ENCODE measurements at regions of chr7 and their contacts with region 1.

Region 1: GRCh38 chr7:140653319-140654108 is 12.9 kb upstream of the DENND2A start:
- DNase-seq: peak; percentile 58 to 64
- H3K4me3 ChIP-seq: no peak overlapping the region
- H3K27ac ChIP-seq: no peak overlapping the region
- H3K4me1 ChIP-seq: peaks cover 0 to 21% (median 7%) of the 10 kb centered on the region in 4 donors
- H3K27me3 ChIP-seq: peaks cover 0 to 10% of the 10 kb centered on the region in 2 donors
- CTCF ChIP-seq: peak; percentile 78 to 85

Region 2: GRCh38 chr7:140517546-140518369 is 135.8 kb before region 1 on chr7:
- intact Hi-C with region 1: loop called (anchors 5 kb)
- DNase-seq: peak; percentile 88 to 91
- H3K4me3 ChIP-seq: no peak overlapping the region
- H3K27ac ChIP-seq: no peak overlapping the region
- H3K4me1 ChIP-seq: peaks cover 0 to 3% (median 0%) of the 10 kb centered on the region in 4 donors
- H3K27me3 ChIP-seq: peaks cover 0 to 2% of the 10 kb centered on the region in 2 donors
- CTCF ChIP-seq: peak; percentile 78 to 86

Region 3: GRCh38 chr7:140609646-140610045 is 43.9 kb before region 1 on chr7:
- intact Hi-C with region 1: no loop called
- DNase-seq: no peak
- H3K4me3 ChIP-seq: no peak overlapping the region
- H3K27ac ChIP-seq: no peak overlapping the region
- H3K4me1 ChIP-seq: peaks cover 0 to 8% (median 0%) of the 10 kb centered on the region in 4 donors
- H3K27me3 ChIP-seq: peaks cover 0 to 3% of the 10 kb centered on the region in 2 donors
- CTCF ChIP-seq: no peak

Region 4: DNA sequence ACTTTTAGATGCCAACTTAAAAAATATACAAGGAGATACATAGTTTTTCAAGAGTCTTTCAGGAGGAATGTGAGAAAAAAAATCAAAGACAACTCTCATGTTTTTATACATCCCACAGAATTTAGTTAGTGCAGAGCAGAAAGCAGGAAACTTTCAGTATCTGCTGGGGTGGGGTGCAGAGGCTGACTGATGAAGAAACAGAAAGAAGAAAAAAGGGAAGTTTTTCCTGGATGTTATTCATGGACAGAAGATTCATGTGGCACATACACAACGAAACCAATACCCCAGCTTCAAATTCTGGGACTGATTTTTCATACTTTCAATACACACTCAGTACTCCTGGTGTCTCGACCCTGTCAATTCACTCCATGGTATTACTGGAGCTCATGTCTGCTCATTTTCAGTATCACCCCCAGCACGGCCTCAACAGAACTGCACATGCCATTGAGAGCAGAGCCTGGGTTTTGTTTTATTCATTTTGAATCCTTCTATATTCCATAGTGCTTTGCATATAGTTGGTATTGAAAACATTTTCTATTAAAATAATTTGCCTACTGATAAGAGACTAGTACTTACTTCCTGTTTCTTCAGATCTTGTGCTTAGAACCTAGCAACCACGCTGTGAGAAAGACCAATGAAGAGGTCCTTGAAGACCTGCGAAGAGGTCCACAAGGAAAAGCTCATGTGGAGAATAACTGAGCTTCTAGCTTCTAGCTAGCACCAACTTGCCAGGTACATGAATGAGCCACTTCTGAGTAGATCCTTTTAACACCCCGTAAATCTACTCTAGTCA is 91.9 kb after region 1 on chr7:
- intact Hi-C with region 1: no loop called
- DNase-seq: no peak
- H3K4me3 ChIP-seq: no peak overlapping the region
- H3K27ac ChIP-seq: no peak overlapping the region
- H3K4me1 ChIP-seq: no peaks in the 10 kb centered on the region
- H3K27me3 ChIP-seq: no peaks in the 10 kb centered on the region
- CTCF ChIP-seq: no peak